Activated T-helper 2 cell treated with anti-CD3 and anti-CD28 coated beads, Interferon-gamma antibody, Interleukin-2, Interleukin-4, amounts not matched to agents 10 μg/mL and 5 μg/mL and 100 μg/mL, durations not matched to agents 14 hours and 24 hours and 36 hours (primary cell): ENCODE measurements at regions of chr7 and their contacts with region 1.

Region 1: DNA sequence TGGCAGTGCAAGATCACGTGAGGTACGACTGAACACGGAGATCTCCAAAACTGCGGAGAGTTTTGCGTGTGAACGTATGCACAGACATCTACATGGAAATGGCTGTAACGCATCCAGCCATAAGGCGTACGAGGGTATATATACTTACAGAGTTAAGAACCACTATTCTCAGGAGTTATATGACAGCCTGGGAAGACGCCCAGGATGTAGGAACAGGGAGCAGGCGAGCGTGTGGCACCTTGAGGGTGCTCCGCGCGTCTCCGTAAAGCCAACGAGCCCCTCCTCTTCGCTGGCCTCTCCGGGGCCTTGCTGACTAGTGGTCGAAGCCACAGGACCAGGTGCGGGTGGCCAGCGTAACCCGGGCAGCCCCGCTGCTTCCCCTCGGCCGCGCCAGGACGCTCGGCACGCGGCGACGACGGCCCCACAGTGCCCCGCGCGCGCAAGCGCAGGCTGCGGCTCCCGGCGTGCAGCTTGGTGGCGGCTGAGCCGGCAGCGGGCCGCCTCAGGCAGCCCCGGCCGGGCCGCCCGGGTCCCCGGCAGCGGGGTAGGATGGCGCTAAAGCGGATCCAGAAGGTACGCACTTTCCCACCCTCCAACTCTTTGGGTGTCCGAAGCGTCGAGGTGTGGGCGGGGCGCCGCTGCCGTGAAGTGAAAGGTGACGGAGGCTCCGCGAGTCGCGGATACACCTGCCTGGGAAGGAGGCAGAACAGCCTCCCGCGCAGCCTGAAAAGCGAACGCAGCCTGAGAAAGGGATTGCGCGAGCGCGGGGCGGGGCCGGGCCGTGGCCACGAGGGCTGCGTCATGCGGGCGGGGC is at the start of gene UBE2D4:
- DNase-seq: peak; percentile 86
- H3K4me3 Mint-ChIP-seq: peak within 1 kb of the TSS; percentile 92
- H3K27ac Mint-ChIP-seq: peak within 1 kb of the TSS; percentile 91
- H3K4me1 Mint-ChIP-seq: peaks cover 23% of the 10 kb centered on the region
- H3K27me3 Mint-ChIP-seq: no peaks in the 10 kb centered on the region
- total RNA-seq, gene UBE2D4: 10.5 and 12.6 TPM in 2 replicates

Region 2: GRCh38 chr7:43602271-43602670 is 323.9 kb before region 1 on chr7:
- intact Hi-C with region 1: no loop called
- DNase-seq: no peak
- H3K4me3 Mint-ChIP-seq: no peak overlapping the region
- H3K27ac Mint-ChIP-seq: no peak overlapping the region
- H3K4me1 Mint-ChIP-seq: peaks cover 24% of the 10 kb centered on the region
- H3K27me3 Mint-ChIP-seq: no peaks in the 10 kb centered on the region

Region 3: GRCh38 chr7:43869006-43869866 is 57.0 kb before region 1 on chr7 and contains the start of gene MRPS24:
- intact Hi-C with region 1: loop called (anchors 5 kb)
- DNase-seq: peak; percentile 87
- H3K4me3 Mint-ChIP-seq: peak within 1 kb of the TSS; percentile 89
- H3K27ac Mint-ChIP-seq: peak within 1 kb of the TSS; percentile 83
- H3K4me1 Mint-ChIP-seq: peaks cover 22% of the 10 kb centered on the region
- H3K27me3 Mint-ChIP-seq: peaks cover 1% of the 10 kb centered on the region
- total RNA-seq, gene MRPS24: 106 and 108 TPM in 2 replicates

Region 4: DNA sequence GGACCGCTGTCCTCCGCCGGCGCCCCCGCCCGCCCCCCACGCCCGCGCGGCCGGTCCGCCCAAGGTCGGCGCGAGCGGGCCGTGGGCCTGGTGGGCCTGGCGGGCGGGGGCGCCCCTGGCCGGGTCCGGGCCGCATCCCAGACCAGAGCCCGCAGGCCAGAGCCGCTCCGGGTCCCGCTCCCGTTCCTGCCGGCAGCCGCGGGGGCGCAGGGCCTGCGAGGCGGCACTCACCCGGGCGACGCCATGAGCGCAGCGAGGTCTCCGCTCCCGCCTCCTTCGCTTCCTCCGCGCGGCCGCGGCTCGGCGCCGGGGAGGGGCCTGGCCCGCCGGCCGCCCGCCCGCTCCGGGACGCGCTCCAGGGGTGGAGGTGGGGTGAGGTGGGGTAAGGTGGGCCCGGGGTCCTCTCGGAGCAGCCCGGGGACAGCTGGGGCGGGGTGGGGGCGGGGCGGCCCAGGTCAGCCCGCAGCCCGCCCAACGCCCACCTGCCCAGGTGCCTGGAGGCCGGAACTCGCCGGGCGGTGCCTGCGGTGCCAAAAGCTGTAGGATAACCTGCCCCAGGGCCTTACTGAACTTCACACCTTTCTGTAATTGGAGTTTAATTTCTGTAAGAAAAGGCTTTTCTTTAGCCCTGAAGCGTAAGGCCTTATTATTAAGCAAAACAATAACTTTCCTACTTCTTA is 19.7 kb before region 1 on chr7 and contains the start of gene URGCP:
- intact Hi-C with region 1: loop called (anchors 1 kb)
- DNase-seq: peak; percentile 47
- H3K4me3 Mint-ChIP-seq: peak within 1 kb of the TSS; percentile 94
- H3K27ac Mint-ChIP-seq: peak within 1 kb of the TSS; percentile 92
- H3K4me1 Mint-ChIP-seq: peaks cover 22% of the 10 kb centered on the region
- H3K27me3 Mint-ChIP-seq: no peaks in the 10 kb centered on the region
- total RNA-seq, gene URGCP: 23.7 and 27.6 TPM in 2 replicates